G401 (cell line): ENCODE measurements at regions of chr22 and their contacts with region 1.

Region 1: GRCh38 chr22:39927544-39927943 is 26.7 kb downstream of the GRAP2 start:
- DNase-seq: no peak

Region 2: DNA sequence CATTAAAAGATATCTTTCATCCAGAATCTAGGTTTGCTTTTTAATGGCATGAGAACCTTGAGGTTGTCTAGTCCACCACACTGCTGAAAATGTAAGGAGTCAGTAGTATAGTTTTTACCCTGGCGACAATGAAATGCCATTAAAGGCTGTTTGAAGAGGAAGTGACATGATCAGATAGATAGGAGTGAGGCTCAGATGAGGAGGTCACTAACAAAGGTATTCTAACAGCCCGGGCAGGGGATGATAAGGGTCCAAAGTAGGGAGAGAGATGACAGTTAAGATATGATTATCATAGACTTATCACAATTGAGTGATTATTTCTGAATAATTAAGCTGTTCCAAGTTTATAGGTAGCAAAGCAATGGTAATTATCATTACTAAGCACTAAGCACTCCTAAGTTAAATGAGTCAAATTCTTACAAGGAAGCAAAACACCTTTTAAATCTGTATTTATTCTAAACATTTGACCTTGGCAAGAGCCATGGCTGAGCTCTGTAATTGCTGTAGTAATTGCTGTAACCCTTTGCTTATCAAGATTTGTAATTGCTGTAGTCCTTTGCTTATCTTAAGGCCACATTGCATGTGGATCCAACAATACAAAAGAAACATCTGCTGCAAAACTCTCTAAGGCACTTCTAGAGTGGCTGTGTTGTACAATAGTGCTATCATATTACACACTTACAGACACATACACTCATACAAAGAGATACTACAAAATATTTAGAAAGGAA is 126.6 kb before region 1 on chr22:
- in situ Hi-C with region 1: no loop called
- DNase-seq: no peak

Region 3: GRCh38 chr22:39856588-39856987 is 71.0 kb before region 1 on chr22:
- in situ Hi-C with region 1: no loop called
- DNase-seq: no peak

Region 4: DNA sequence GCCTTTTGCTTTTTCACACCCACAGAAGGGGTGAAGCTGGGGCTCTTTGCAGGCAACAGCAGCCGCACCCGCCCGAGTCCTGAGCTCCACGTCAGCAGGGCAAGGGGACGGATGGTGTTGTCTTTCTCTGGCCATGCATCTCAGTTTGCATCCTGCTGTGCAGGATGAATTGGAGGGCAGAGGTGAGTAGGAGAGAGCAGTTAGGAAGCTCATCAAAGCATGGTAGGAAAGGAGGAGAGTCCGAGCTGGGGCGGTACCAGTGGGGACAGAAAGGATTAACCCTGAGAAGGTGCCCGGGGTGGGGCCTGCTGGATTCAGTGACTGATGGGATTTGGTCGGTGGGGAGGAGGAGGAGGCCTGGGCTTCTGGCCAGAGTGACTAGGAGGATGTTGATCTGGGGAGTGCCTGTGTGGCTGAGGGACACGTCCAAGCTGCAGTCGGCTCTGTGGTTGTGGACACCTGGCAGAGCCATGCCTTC is 81.8 kb after region 1 on chr22:
- in situ Hi-C with region 1: loop called (anchors 10 kb)
- DNase-seq: no peak